HepG2 (cell line): ENCODE measurements at regions of chr6 and their contacts with region 1.

Region 1: GRCh38 chr6:34425498-34426410 is at the start of gene RPS10:
- DNase-seq: peak; percentile 90
- ATAC-seq: peak; percentile 93
- H3K4me3 ChIP-seq: peak within 1 kb of the TSS; percentile 74 to 98 (median 89)
- H3K27ac ChIP-seq: peak within 1 kb of the TSS; percentile 73
- H3K4me1 ChIP-seq: peaks cover 58% of the 10 kb centered on the region
- H3K27me3 ChIP-seq: peaks cover 0 to 2% of the 10 kb centered on the region in 2 experiments; a peak in 1 of 5 replicates
- CTCF ChIP-seq: peak; percentile 52
- EP300 ChIP-seq: 0 out of 4 replicates have a peak, but pooled peaks of 1 of the 2 experiments have one; percentile 38
- POLR2A ChIP-seq: peak; percentile 97 to 98
- RAD21 ChIP-seq: peak; percentile 56
- total RNA-seq, gene RPS10: 2,909 and 3,503 TPM in 2 replicates

Region 2: GRCh38 chr6:34295721-34296120 is 130.0 kb before region 1 on chr6:
- CTCF ChIA-PET with region 1: no interaction called
- POLR2A ChIA-PET with region 1: no interaction called
- in situ Hi-C with region 1: no loop called
- intact Hi-C with region 1: no loop called
- DNase-seq: no peak
- ATAC-seq: no peak
- H3K4me3 ChIP-seq: no peak overlapping the region
- H3K27ac ChIP-seq: no peak overlapping the region
- H3K4me1 ChIP-seq: peaks cover 7% of the 10 kb centered on the region
- H3K27me3 ChIP-seq: no peaks in the 10 kb centered on the region
- CTCF ChIP-seq: no peak
- EP300 ChIP-seq: no peak
- POLR2A ChIP-seq: no peak
- RAD21 ChIP-seq: no peak

Region 3: GRCh38 chr6:34436803-34437643 is 11.3 kb after region 1 on chr6:
- CTCF ChIA-PET with region 1: no interaction called
- POLR2A ChIA-PET with region 1: interaction called, 20 read pairs
- in situ Hi-C with region 1: no loop called
- intact Hi-C with region 1: no loop called
- DNase-seq: no peak
- ATAC-seq: peak; percentile 61
- H3K4me3 ChIP-seq: no peak overlapping the region
- H3K27ac ChIP-seq: no peak overlapping the region
- H3K4me1 ChIP-seq: no peaks in the 10 kb centered on the region
- H3K27me3 ChIP-seq: no peaks in the 10 kb centered on the region; a peak in 1 of 5 replicates
- CTCF ChIP-seq: no peak
- EP300 ChIP-seq: no peak
- POLR2A ChIP-seq: no peak
- RAD21 ChIP-seq: no peak